ENCODE measurements at regions of chr10 and their contacts with region 1.

Region 1: GRCh38 chr10:90862908-90863514 is 5.2 kb upstream of the HTR7 start:
- DNase-seq: no peak
- ATAC-seq: no peak
- H3K4me3 ChIP-seq: no peak overlapping the region
- H3K27ac ChIP-seq: no peak overlapping the region
- H3K4me1 ChIP-seq: no peaks in the 10 kb centered on the region
- H3K27me3 ChIP-seq: no peaks in the 10 kb centered on the region
- CTCF ChIP-seq: peak in 3 of 5 experiments; percentile 28 to 52 (median 41)
- POLR2A ChIP-seq: no peak

Region 2: DNA sequence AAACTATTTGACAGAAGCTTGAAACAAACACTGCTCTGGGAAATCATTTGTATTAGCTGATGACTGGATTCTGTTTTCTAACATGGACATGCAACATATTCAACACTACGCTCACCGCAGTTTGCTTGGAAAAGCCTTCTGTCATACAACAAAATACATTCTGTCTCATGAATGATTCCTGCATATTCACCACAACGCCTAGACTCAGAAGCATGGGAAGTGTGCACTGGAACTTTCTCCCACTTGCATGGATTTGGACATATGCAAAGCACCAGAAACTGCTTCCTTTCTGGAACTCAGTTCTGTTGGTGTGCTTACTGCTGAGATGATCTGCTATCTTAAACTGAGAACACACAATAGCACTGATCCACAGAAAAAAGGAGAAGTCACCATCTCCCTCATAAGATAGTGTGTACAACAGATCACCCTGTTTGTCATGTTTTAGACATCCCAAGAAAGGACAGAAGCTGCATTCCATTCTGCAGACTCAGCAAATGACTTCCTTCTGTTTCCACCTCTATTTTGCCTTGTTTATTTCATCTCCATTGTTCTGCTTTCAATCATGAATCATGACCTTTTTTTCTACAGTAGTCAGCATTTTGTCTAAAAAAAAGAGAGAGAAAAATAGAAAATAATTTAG is 121.0 kb before region 1 on chr10:
- in situ Hi-C with region 1: loop called in 1 of 4 experiments (anchors 10 kb)
- intact Hi-C with region 1: no loop called
- DNase-seq: no peak
- ATAC-seq: peak in 1 of 2 donors; percentile 53
- H3K4me3 ChIP-seq: no peak overlapping the region
- H3K27ac ChIP-seq: no peak overlapping the region
- H3K4me1 ChIP-seq: no peaks in the 10 kb centered on the region
- H3K27me3 ChIP-seq: no peaks in the 10 kb centered on the region
- CTCF ChIP-seq: no peak
- POLR2A ChIP-seq: no peak

Region 3: GRCh38 chr10:90751107-90751997 is 111.7 kb before region 1 on chr10:
- in situ Hi-C with region 1: loop called in 1 of 4 experiments (anchors 10 kb)
- intact Hi-C with region 1: loop called (anchors 2 kb)
- DNase-seq: no peak
- ATAC-seq: no peak
- H3K4me3 ChIP-seq: no peak overlapping the region
- H3K27ac ChIP-seq: no peak overlapping the region
- H3K4me1 ChIP-seq: no peaks in the 10 kb centered on the region
- H3K27me3 ChIP-seq: no peaks in the 10 kb centered on the region
- CTCF ChIP-seq: peak; percentile 40 to 63 (median 47)
- POLR2A ChIP-seq: no peak

Region 4: DNA sequence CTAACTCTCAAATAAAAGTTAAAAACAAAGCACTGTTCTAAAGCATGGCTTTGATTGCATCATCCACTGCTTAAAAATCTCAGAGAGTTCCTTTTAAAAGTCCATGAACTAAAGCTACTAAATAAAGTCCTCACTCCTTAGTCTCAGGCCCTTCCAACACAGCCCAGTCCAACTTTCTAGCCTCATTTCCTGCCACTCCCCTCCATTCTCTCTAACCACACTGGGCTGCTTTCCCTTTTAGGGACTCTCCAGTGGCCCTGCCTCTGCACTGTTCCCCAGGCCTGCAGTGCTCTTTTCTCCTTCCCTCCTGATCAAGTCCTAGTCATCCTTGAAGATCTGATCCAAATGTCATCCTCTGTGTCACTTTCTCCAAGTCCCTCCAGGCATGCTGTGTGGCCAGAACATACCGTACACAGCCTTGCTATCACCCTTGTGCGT is 826.7 kb after region 1 on chr10:
- in situ Hi-C with region 1: no loop called
- intact Hi-C with region 1: no loop called
- DNase-seq: peak; percentile 3 to 19
- ATAC-seq: peak; percentile 60 to 78
- H3K4me3 ChIP-seq: no peak overlapping the region
- H3K27ac ChIP-seq: peak overlapping the region in 2 of 4 donors; percentile 9 to 49
- H3K4me1 ChIP-seq: peaks cover 0 to 8% of the 10 kb centered on the region in 2 donors
- H3K27me3 ChIP-seq: no peaks in the 10 kb centered on the region
- CTCF ChIP-seq: no peak
- POLR2A ChIP-seq: no peak

Measured in gastrocnemius medialis (tissue), 4 donors.